Cardiac septum (tissue), 1 donor: ENCODE measurements at regions of chr19 and their contacts with region 1.

Region 1: DNA sequence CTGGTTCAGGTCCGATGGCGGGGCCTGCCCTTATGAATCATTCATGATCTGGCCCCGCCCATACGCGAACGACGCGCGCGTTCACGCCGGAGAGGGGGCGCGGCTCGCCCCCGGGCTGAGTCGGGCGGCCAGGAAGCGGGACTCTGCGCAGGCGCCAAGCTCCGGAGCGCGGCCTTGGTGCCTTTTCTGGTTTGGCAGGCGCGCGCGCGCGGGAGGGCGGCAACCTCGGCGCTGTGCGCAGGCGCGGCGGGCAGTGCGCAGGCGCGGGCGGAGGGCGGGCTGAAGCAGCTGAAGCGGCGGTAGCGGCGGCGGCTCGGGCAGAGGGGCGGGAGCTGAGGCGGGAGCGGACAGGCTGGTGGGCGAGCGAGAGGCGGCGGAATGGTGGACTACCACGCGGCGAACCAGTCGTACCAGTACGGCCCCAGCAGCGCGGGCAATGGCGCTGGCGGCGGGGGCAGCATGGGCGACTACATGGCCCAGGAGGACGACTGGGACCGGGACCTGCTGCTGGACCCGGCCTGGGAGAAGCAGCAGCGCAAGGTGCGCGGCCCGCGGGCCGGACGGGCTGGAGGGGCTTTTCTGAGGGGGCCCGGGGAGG is at the start of gene ACTN4:
- DNase-seq: peak; percentile 100
- total RNA-seq, gene ACTN4: 190 TPM

Region 2: DNA sequence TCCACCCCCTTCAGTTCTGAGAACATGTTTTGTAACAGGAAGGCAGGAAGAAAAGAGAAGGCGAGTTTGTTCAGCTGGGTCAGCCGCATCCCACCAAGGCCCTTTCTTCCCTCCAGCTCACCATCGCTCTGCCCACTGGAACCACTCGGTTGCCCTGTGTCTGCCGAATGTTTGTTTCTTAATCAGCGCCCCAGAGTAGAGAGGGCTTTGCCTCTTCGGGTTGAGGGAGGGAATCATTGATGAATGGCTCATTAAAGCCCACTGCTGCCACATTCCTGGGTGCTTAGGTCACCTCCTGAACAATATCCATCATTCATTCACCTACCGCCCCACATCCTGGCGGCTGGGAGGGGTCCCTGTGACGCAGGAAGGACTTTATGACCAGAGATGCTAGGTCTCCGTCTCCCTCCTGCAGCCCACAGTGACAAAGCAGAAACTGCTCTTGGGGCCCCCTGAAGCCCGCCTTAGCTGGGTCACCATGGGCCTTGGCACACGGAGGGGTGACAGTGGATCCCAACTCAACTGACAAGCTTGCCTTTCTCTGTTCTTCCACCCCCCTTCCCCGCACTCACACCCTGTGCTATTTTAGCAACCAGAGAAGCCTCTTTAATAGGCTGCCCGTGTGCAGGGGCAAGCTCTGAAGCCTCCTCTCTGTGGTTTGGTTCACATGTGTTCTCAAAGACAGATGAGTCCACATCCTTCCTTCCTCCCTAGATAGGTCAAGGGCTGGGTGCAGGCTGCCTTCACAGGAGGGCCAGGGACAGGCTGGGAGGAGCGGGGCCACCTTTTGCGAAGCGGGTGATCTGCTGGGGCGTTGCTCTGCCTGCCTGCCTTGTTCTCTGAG is 46.1 kb after region 1 on chr19:
- intact Hi-C with region 1: loop called (anchors 2 kb)
- DNase-seq: peak; percentile 77

Region 3: GRCh38 chr19:38707512-38708114 is 60.1 kb after region 1 on chr19:
- intact Hi-C with region 1: loop called (anchors 5 kb)
- DNase-seq: peak; percentile 89

Region 4: GRCh38 chr19:38718747-38719543 is 71.5 kb after region 1 on chr19:
- intact Hi-C with region 1: loop called (anchors 2 kb)
- DNase-seq: peak; percentile 88

Region 5: DNA sequence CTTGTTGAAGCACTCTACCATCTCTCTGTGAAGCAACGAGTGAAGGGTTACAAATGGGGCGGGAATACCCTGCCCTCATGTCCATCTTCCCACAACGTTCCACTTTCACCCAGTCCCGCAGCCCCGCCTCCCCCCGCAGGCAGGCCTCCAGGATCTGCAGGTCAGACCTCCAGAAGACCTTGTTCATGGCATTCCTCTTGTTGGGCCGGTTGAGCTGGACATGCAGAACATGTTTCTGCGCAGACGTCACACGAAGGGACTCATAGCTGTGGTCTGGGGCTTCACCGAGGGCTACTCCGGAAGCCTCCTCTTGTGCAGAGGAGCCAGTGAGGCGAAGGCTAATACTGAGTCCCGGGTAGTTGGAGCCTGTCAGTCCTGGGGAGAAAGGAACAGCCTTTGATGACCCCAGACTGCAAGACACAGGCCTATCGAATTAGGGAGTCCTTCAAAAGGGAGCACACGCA is 183.7 kb after region 1 on chr19:
- intact Hi-C with region 1: loop called (anchors 10 kb)
- DNase-seq: peak; percentile 79

Region 6: GRCh38 chr19:38849860-38850435 is 202.5 kb after region 1 on chr19 and contains the start of gene HNRNPL:
- intact Hi-C with region 1: loop called (anchors 5 kb)
- DNase-seq: peak; percentile 100
- total RNA-seq, gene HNRNPL: 136 TPM